Gastrocnemius medialis (tissue), 4 donors: ENCODE measurements at regions of chr15 and their contacts with region 1.

Region 1: GRCh38 chr15:43881944-43882343 is 55.1 kb downstream of the WDR76 start:
- DNase-seq: no peak
- ATAC-seq: no peak
- H3K4me3 ChIP-seq: no peak overlapping the region
- H3K27ac ChIP-seq: no peak overlapping the region
- H3K4me1 ChIP-seq: no peaks in the 10 kb centered on the region
- H3K27me3 ChIP-seq: no peaks in the 10 kb centered on the region
- CTCF ChIP-seq: no peak
- POLR2A ChIP-seq: no peak

Region 2: DNA sequence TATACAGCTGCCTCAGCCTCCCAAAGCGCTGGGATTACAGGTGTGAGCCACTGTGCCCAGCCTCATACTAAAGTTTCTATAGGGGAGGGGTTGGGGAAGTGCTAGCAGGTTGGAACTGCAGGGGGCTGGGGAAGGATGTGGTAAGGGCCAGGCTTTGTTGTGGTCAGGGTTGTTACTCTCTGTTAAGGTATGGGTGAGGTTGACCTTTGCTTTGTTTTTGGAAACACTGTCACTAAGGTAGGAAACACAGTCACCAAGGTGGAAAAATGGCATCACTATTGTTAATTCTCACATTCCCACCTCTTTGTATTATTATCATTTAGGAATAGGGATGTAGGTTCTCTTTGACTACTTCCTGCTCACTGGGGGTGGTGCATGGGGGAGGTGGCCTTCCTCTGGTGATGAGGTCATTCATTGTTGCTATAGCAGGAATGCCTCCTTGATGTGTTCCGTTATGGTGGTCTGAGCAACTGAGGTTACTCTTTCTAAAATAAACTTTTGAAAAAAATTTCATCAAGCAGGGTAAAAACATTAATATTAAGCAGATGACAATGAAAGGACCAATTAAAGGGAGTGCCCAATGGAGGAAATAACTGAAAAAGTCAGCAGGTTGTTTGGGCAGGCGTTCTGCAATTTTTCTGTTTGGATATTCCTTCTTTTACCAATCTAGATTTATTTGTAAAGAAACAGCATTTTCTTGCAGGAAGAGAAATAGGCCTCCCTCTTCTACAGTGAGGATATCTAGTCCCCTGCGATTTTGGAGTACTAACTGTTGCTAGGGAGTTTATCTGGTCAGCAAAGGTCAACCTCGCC is 95.3 kb after region 1 on chr15:
- in situ Hi-C with region 1: no loop called
- intact Hi-C with region 1: no loop called
- DNase-seq: no peak
- ATAC-seq: no peak
- H3K4me3 ChIP-seq: no peak overlapping the region
- H3K27ac ChIP-seq: no peak overlapping the region
- H3K4me1 ChIP-seq: no peaks in the 10 kb centered on the region
- H3K27me3 ChIP-seq: no peaks in the 10 kb centered on the region
- CTCF ChIP-seq: no peak
- POLR2A ChIP-seq: no peak

Region 3: GRCh38 chr15:44157685-44158099 is 275.7 kb after region 1 on chr15:
- in situ Hi-C with region 1: no loop called
- intact Hi-C with region 1: no loop called
- DNase-seq: no peak
- ATAC-seq: no peak
- H3K4me3 ChIP-seq: no peak overlapping the region
- H3K27ac ChIP-seq: no peak overlapping the region
- H3K4me1 ChIP-seq: no peaks in the 10 kb centered on the region
- H3K27me3 ChIP-seq: no peaks in the 10 kb centered on the region
- CTCF ChIP-seq: no peak
- POLR2A ChIP-seq: no peak

Region 4: GRCh38 chr15:44215594-44215993 is 333.6 kb after region 1 on chr15:
- in situ Hi-C with region 1: loop called in 1 of 4 experiments (anchors 25 kb)
- intact Hi-C with region 1: no loop called
- DNase-seq: no peak
- ATAC-seq: no peak
- H3K4me3 ChIP-seq: no peak overlapping the region
- H3K27ac ChIP-seq: no peak overlapping the region
- H3K4me1 ChIP-seq: no peaks in the 10 kb centered on the region
- H3K27me3 ChIP-seq: peaks cover 0 to 9% (median 0%) of the 10 kb centered on the region in 3 donors
- CTCF ChIP-seq: no peak
- POLR2A ChIP-seq: no peak